GM12878 (cell line): ENCODE measurements at regions of chr1 and their contacts with region 1.

Region 1: DNA sequence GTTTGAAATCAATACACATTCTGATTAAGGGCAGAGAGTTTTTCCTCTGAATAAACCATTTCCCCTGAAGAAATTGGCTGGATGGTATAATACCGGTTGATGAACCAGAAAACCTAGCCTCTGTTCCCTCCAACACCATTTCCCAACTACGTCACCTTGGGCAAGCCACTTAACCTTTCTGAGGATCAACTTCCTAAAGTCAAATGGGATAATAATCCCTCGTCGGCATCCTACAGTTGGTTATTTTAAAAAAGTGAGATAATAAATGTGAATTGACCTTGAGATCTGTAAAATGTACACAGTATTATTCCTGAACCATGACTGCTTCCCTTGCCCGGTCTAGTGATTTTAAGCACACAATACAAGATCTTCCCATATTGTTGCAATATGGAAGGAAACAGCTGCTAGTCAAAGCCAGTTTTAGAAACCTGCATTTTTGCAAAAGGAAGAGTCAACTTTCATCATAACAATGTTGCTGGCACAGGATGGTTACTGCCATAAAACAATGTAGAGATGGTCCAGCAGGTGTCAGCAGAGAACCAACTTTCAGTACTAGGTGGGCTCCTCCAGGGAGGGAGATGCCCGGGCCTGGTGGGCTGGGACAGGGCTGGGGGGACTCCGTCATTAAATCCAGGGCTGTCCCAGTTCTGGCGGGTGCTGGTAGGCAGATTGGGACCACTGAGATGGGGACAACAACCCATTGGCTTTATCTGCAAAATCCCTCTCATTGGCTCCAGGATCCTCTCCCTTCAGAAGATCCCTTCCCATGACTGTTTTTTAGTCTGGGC is 5.2 kb upstream of the HLX start:
- DNase-seq: no peak
- ATAC-seq: peak; percentile 47
- H3K4me3 ChIP-seq: no peak overlapping the region
- H3K27ac ChIP-seq: no peak overlapping the region
- H3K4me1 ChIP-seq: peaks cover 10% of the 10 kb centered on the region
- H3K27me3 ChIP-seq: 0 out of 4 replicates have a peak, but pooled peaks cover 0 to 4% of the 10 kb centered on the region in 2 experiments
- CTCF ChIP-seq: peak; percentile 60 to 79 (median 65); a peak in 5 of 6 replicates
- EP300 ChIP-seq: no peak
- POLR2A ChIP-seq: no peak
- RAD21 ChIP-seq: peak; percentile 82

Region 2: GRCh38 chr1:220908757-220909156 is 34.7 kb after region 1 on chr1:
- CTCF ChIA-PET with region 1: interaction called, 13 read pairs
- POLR2A ChIA-PET with region 1: no interaction called
- RAD21 ChIA-PET with region 1: interaction called, 5 read pairs
- SMC1A ChIA-PET with region 1: interaction called, 5 read pairs
- in situ Hi-C with region 1: no loop called
- intact Hi-C with region 1: no loop called
- DNase-seq: no peak
- ATAC-seq: peak; percentile 68
- H3K4me3 ChIP-seq: no peak overlapping the region
- H3K27ac ChIP-seq: no peak overlapping the region
- H3K4me1 ChIP-seq: no peaks in the 10 kb centered on the region
- H3K27me3 ChIP-seq: no peaks in the 10 kb centered on the region; a peak in 2 of 4 replicates
- CTCF ChIP-seq: peak; percentile 50 to 57 (median 53); a peak in 5 of 6 replicates
- EP300 ChIP-seq: no peak
- POLR2A ChIP-seq: no peak
- RAD21 ChIP-seq: peak; percentile 78

Region 3: GRCh38 chr1:220950576-220950975 is 76.5 kb after region 1 on chr1:
- CTCF ChIA-PET with region 1: no interaction called
- POLR2A ChIA-PET with region 1: no interaction called
- RAD21 ChIA-PET with region 1: no interaction called
- SMC1A ChIA-PET with region 1: no interaction called
- in situ Hi-C with region 1: no loop called
- intact Hi-C with region 1: no loop called
- DNase-seq: no peak
- ATAC-seq: no peak
- H3K4me3 ChIP-seq: no peak overlapping the region
- H3K27ac ChIP-seq: no peak overlapping the region
- H3K4me1 ChIP-seq: no peaks in the 10 kb centered on the region
- H3K27me3 ChIP-seq: no peaks in the 10 kb centered on the region
- CTCF ChIP-seq: no peak
- EP300 ChIP-seq: no peak
- POLR2A ChIP-seq: no peak
- RAD21 ChIP-seq: no peak

Region 4: DNA sequence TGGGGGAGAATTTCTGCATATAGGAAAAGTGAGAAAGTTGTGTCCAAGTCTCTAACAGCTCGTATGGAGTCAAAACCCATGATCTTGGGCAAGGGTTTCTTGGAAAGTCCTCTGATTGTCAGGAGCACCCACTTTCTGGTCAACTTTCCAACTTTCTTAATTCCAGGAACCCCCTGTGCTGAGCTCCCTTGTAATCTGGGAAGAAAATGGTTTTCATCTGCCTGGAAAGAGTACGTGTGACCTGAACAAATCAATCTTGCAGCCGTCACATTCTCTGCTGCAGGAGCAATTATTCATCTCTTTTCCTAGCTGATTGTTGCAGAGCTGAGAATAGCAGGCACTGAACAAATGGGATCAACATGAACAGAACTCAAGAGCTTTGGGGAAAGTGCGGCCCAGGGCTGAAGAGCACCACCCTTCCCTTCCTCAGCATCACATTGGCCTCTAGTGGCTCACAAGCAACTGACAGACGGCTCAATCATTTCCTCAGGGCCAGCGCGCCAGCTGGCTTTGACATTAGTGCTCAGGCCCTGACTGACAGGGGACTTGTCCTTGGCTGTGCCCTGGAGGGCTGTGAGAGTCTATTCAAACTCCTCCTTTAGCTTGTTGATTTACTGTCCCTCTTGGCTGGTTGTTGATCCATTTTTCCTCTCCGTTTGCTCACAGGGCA is 300.4 kb after region 1 on chr1:
- CTCF ChIA-PET with region 1: interaction called, 3 read pairs
- POLR2A ChIA-PET with region 1: no interaction called
- RAD21 ChIA-PET with region 1: interaction called, 6 read pairs
- SMC1A ChIA-PET with region 1: interaction called, 10 read pairs
- in situ Hi-C with region 1: no loop called
- intact Hi-C with region 1: no loop called
- DNase-seq: no peak
- ATAC-seq: peak; percentile 66
- H3K4me3 ChIP-seq: no peak overlapping the region
- H3K27ac ChIP-seq: no peak overlapping the region
- H3K4me1 ChIP-seq: no peaks in the 10 kb centered on the region
- H3K27me3 ChIP-seq: no peaks in the 10 kb centered on the region; a peak in 1 of 4 replicates
- CTCF ChIP-seq: peak in 2 of 3 experiments; percentile 2 to 19; a peak in 2 of 6 replicates
- EP300 ChIP-seq: no peak
- POLR2A ChIP-seq: no peak
- RAD21 ChIP-seq: peak; percentile 39

Region 5: DNA sequence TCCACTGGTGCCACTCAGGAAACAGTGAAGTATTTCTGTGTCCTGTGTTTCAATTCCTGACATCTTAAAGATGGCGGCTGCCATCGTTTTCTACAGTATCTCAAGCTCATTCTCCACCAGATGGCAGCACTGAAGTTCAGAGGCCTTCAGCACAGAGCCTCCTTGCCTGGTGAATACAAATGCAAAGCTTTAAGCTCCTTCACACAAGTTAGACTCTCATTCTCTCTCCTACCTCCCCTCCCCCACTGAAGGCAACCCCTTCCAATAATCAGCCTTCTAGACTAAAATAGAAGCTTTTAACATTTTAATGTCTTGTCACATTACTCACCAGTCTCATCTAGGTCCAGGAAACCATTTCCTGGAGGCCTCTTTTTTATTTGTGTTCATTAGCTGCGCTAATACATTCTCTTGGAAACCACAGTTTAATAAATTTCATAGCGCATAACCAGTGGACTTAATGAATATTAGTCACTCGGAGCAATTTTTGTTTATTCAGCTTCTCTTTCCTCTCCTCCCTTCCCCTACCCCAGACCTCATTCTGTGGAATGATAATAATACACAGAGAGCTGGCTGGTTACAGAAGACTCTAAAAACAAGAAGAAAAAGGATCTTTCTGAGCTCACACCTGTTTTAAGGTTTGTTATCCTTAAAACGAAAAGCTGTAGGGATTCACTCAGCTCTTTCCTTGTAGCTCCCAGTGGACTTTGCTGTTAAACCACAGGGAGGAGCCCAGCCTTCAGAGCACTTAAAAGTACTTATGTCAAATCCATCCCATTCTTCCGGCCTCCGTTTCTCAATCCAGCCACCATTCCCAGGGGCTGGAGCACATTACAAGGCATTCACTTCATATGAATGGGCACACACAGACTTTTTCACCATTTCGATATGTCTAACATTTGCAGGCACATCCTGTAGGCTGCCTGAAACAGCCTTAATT is 390.0 kb after region 1 on chr1:
- CTCF ChIA-PET with region 1: interaction called, 15 read pairs
- POLR2A ChIA-PET with region 1: no interaction called
- RAD21 ChIA-PET with region 1: interaction called, 3 read pairs
- SMC1A ChIA-PET with region 1: interaction called, 7 read pairs
- in situ Hi-C with region 1: no loop called
- intact Hi-C with region 1: loop called (anchors 2 kb)
- DNase-seq: peak; percentile 5
- ATAC-seq: peak; percentile 97
- H3K4me3 ChIP-seq: no peak overlapping the region
- H3K27ac ChIP-seq: no peak overlapping the region
- H3K4me1 ChIP-seq: no peaks in the 10 kb centered on the region
- H3K27me3 ChIP-seq: no peaks in the 10 kb centered on the region
- CTCF ChIP-seq: peak; percentile 47 to 57 (median 51); a peak in 5 of 6 replicates
- EP300 ChIP-seq: no peak
- POLR2A ChIP-seq: no peak
- RAD21 ChIP-seq: peak; percentile 51

Region 6: DNA sequence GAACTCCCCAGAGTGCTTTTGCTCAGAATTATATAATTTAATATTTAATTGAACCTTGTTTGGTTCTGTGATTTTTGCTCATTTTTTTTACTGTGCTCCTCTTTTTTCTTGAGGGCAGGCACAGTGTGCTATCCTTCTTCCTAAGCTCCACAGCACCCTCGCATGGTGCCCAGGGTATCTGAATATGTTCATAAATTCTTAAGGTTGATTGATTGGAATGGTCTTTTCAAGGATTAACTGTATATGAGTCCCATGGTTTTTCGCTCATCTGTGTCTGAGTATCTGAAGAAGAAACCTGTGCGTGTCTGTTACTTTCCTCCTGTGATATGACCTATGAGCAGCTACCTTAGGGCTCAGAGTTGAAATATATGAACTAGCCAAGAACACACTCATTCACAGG is 398.9 kb after region 1 on chr1:
- CTCF ChIA-PET with region 1: interaction called, 13 read pairs
- POLR2A ChIA-PET with region 1: no interaction called
- RAD21 ChIA-PET with region 1: interaction called, 6 read pairs
- SMC1A ChIA-PET with region 1: interaction called, 10 read pairs
- in situ Hi-C with region 1: no loop called
- intact Hi-C with region 1: loop called (anchors 2 kb)
- DNase-seq: no peak
- ATAC-seq: peak; percentile 51; the same call in 1 of the 3 replicates
- H3K4me3 ChIP-seq: no peak overlapping the region
- H3K27ac ChIP-seq: no peak overlapping the region
- H3K4me1 ChIP-seq: no peaks in the 10 kb centered on the region
- H3K27me3 ChIP-seq: no peaks in the 10 kb centered on the region
- CTCF ChIP-seq: no peak; a peak in 1 of 6 replicates
- EP300 ChIP-seq: no peak
- POLR2A ChIP-seq: no peak
- RAD21 ChIP-seq: peak; percentile 20; the same call in 1 of the 2 replicates